ENCODE measurements at regions of chr4 and their contacts with region 1.

Region 1: GRCh38 chr4:168923526-168924194 is 86.4 kb downstream of the CBR4 start:
- DNase-seq: peak in 1 of 3 donors; percentile 32
- ATAC-seq: peak; percentile 48 to 65
- H3K4me3 ChIP-seq: no peak overlapping the region
- H3K27ac ChIP-seq: no peak overlapping the region
- H3K4me1 ChIP-seq: no peaks in the 10 kb centered on the region
- H3K27me3 ChIP-seq: no peaks in the 10 kb centered on the region

Region 2: DNA sequence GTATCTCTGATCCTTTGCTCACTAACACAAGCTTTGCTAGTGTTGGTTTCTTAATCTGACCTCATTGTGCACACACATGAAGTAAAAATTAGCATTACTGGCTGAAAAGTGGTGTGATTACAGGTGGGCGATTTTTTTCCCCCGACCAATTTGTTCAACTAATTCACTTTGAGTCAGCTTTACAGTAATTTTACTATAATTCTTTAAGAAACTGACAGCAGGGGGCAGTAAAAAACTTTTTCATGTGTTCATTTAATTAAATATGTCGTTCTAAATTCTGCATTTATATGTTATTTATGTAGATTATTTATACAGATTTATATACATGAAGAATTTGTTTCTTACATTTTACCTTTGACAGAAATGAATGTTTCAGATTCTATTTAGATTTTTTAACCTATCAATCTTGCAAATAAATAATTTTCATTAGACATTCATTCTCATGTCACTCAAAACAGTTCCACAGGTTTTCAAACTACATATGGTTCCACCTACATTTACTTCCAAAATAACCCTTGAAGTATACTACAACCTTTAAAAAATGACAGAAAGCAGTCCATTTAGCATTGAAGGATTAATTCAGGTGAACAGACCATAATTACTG is 409.3 kb before region 1 on chr4:
- intact Hi-C with region 1: loop called in 1 of 4 experiments (anchors 10 kb)
- DNase-seq: no peak
- ATAC-seq: no peak
- H3K4me3 ChIP-seq: no peak overlapping the region
- H3K27ac ChIP-seq: no peak overlapping the region
- H3K4me1 ChIP-seq: no peaks in the 10 kb centered on the region
- H3K27me3 ChIP-seq: no peaks in the 10 kb centered on the region

Region 3: DNA sequence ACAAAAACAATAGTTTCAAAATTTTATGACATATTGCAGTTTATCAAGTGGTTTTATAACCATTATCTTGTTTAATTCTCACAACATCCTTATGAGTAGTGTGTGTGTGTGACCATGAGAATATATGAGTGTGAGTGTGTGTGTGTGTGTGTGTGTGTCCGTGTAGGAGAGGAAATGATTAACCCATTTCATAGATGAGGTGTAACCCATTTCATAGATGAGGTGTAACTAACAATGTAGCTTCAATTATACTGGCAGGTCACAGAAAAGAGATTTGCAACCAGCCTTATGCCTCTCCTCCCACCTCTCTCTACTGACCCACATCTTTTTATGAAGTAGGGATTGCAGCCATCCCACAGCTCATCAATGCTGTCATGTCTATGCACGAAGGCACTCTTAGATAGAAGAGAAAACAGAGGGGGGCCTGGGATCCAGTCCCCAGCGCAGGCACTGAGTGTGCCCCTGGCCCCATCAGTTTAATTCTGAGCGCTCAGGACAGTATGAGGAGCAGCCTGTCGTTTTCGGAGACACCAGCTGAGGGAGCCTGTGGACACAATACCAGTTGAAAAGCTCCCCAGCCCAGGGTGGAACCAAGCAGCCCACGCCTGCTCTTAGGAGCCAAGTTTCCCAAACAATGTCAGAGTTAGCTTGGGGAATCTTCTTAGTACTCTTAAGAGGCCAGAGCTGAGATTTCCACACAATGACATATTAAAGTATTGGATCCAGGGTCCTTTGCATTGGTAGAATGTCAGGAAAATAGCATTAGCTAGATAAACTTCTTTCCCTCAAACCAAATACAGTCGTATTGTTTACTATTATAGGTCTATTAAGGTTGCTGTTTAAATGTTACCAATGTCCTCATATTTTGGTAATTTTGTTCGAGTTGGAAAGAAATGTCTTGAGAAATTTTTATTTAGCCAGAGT is 338.2 kb before region 1 on chr4:
- intact Hi-C with region 1: loop called in 2 of 4 experiments (anchors 10 kb)
- DNase-seq: peak; percentile 85 to 93 (median 87)
- ATAC-seq: peak; percentile 92 to 93
- H3K4me3 ChIP-seq: no peak overlapping the region
- H3K27ac ChIP-seq: no peak overlapping the region
- H3K4me1 ChIP-seq: peaks cover 6% of the 10 kb centered on the region
- H3K27me3 ChIP-seq: no peaks in the 10 kb centered on the region

Region 4: DNA sequence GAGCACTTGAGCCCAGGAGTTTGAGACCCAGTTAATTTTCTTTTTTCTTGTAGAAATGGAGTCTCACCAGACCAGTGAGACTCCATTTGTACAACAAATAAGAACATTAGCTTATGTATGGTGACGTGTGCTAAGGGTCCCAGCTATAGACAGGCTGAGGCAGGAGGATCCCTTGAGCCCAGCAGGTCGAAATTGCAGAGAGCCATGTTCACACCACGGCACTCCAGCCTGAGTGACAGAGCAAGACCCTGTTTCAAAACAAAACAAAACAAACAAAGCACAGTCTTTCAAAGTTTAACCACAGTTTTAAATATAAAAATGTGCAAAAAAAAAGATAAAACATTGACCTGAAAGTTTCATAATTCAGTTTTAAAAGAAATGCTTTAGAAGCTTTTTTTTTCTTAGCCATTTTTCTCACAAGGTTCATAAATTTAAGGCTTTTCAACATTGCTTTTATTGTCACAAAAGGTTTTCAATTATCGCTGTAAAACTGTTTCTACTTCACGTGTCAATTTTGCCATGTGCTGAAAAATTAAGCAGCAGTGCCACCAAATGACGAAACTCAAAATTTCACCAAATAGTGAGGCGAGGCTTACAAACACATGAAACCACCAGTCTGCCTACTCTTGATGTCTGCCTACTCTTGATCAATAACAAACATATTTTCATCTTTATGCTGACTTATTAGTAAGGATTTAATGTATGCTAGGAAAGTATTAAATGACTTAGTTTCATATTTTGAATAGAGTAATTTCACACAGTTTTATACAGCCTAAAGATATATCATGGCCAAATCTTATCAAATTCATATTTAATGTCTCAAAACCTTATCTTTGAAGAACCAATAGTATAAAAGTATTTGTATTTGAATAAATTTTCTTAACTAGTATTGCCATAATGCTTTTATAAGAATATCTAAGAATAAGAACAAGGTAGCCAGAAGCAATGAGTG is 562.4 kb after region 1 on chr4:
- intact Hi-C with region 1: loop called in 3 of 4 experiments (anchors 5 to 10 kb)
- DNase-seq: no peak
- ATAC-seq: peak in 1 of 2 donors; percentile 52
- H3K4me3 ChIP-seq: no peak overlapping the region
- H3K27ac ChIP-seq: no peak overlapping the region
- H3K4me1 ChIP-seq: no peaks in the 10 kb centered on the region
- H3K27me3 ChIP-seq: no peaks in the 10 kb centered on the region

Region 5: DNA sequence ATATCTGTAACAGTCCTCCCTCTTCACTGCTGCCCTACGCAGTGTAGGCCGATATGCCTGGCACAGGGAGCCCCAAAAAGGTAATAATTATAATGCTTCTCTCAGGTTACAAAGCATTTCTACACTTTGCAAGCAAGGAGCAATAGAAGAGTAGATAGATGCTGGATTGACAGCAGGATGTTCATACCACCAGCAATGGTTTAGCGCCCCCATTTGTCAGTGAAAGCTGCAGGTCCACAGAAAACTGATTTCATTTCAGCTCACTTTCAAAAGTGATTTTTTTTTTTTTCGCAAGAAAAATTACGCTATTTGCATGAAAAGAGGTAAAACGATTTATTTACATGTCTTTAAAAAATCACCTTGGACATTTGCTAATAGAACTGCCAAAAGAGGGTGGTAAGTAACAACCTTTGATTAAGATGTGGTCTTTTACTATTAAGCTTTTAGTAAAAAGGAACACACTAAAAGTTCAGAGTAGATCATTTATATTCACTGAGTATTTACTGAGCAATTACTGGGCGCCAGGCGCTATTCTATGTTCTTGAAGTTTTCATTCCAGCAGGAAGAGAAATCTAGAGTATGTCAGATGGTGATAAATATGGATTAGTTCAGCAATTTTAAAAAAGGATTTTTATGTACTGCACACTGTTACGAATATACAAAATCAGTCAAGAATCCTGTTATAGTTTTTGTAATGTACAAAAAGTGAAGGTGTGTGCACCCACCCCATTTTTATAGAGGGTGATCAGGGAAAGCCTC is 799.7 kb after region 1 on chr4:
- intact Hi-C with region 1: no loop called
- DNase-seq: no peak
- ATAC-seq: no peak
- H3K4me3 ChIP-seq: no peak overlapping the region
- H3K27ac ChIP-seq: no peak overlapping the region
- H3K4me1 ChIP-seq: no peaks in the 10 kb centered on the region
- H3K27me3 ChIP-seq: no peaks in the 10 kb centered on the region